ENCODE measurements at regions of chr6 and their contacts with region 1.

Region 1: GRCh38 chr6:46626228-46626909 is 26.2 kb downstream of the CYP39A1 start:
- DNase-seq: no peak
- H3K4me3 ChIP-seq: no peak overlapping the region
- H3K27ac ChIP-seq: peak overlapping the region in 2 of 4 donors; percentile 14 to 44
- H3K4me1 ChIP-seq: no peaks in the 10 kb centered on the region
- H3K27me3 ChIP-seq: no peaks in the 10 kb centered on the region
- CTCF ChIP-seq: peak; percentile 43 to 67 (median 48)
- POLR2A ChIP-seq: no peak

Region 2: DNA sequence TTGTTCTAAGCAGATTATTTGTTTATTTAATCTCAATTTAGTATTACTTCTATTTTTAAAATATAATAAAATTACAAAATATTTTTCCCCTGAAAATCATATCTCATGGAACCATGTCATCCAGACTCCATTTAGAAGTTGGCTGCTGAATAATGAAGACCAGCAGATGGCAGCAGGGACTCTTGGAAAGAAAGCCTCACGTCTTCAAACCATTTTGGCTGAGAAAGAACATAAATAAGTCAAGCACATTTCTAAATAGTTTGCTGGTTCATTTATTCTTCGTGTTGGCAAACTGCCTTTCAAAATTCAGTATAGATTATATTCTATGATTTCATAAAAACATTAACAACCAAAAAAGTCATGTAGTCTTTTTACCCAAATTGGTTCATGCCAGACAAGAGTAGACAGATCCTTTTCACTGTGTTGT is 206.8 kb before region 1 on chr6:
- intact Hi-C with region 1: loop called (anchors 10 kb)
- DNase-seq: no peak
- H3K4me3 ChIP-seq: no peak overlapping the region
- H3K27ac ChIP-seq: no peak overlapping the region
- H3K4me1 ChIP-seq: peaks cover 0 to 4% (median 0%) of the 10 kb centered on the region in 3 donors
- H3K27me3 ChIP-seq: no peaks in the 10 kb centered on the region
- CTCF ChIP-seq: peak; percentile 36 to 72 (median 64)
- POLR2A ChIP-seq: no peak

Region 3: GRCh38 chr6:46720401-46720800 is 94.0 kb after region 1 on chr6:
- intact Hi-C with region 1: no loop called
- DNase-seq: no peak
- H3K4me3 ChIP-seq: no peak overlapping the region
- H3K27ac ChIP-seq: no peak overlapping the region
- H3K4me1 ChIP-seq: no peaks in the 10 kb centered on the region
- H3K27me3 ChIP-seq: peaks cover 0 to 27% (median 0%) of the 10 kb centered on the region in 4 donors
- CTCF ChIP-seq: no peak
- POLR2A ChIP-seq: no peak

Region 4: GRCh38 chr6:46850792-46851191 is 224.4 kb after region 1 on chr6:
- intact Hi-C with region 1: no loop called
- DNase-seq: no peak
- H3K4me3 ChIP-seq: no peak overlapping the region
- H3K27ac ChIP-seq: no peak overlapping the region
- H3K4me1 ChIP-seq: peaks cover 0 to 13% (median 4%) of the 10 kb centered on the region in 3 donors
- H3K27me3 ChIP-seq: no peaks in the 10 kb centered on the region
- CTCF ChIP-seq: no peak
- POLR2A ChIP-seq: no peak

Measured in esophagus squamous epithelium (tissue), 5 donors.